Calu3 (cell line): ENCODE measurements at regions of chr5 and their contacts with region 1.

Region 1: DNA sequence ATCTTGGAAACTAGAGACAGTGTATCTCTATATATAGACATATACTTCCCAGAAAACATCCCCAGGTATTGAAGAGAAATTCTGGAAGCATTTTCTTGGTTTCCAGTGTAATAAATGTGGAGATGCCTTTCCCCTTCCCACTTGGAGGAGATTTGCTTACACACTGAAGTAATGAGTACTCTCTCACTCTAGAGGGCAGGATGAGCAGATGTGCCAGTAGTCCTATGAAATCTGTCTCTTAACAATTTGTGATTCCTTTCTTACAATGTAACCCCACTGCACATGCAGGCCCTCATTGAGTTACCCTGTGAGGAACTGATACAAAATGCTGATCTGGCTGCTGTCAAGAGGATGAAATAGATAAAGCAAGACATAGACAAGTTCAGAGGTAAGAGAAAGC is 567.2 kb downstream of the SLCO4C1 start:
- DNase-seq: no peak
- H3K4me3 Mint-ChIP-seq: no peak overlapping the region
- H3K27ac Mint-ChIP-seq: no peak overlapping the region
- H3K4me1 Mint-ChIP-seq: peaks cover 14% of the 10 kb centered on the region
- H3K27me3 Mint-ChIP-seq: no peaks in the 10 kb centered on the region
- CTCF ChIP-seq: no peak

Region 2: DNA sequence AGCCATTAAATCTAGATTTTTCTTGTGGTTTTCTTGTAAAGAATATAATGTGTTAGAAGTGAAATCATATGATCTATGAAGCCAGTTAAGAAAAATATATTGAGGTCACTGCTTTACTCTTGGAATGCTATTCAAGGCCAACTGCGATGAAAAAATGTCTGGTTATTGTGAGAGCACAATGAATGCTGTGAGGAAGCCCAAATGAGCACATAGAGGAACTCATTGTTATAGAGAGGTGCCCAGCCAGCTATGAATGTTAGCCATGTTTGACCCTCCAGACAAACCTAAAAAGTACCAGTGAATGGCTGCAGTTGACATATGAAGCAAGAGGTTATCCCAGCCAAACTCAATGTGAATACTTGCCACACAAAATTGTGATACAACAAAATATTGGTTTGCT is 1553.6 kb before region 1 on chr5:
- CTCF ChIA-PET with region 1: no interaction called
- intact Hi-C with region 1: no loop called
- DNase-seq: no peak
- H3K4me3 Mint-ChIP-seq: no peak overlapping the region
- H3K27ac Mint-ChIP-seq: no peak overlapping the region
- H3K4me1 Mint-ChIP-seq: no peaks in the 10 kb centered on the region
- H3K27me3 Mint-ChIP-seq: no peaks in the 10 kb centered on the region
- CTCF ChIP-seq: no peak

Region 3: DNA sequence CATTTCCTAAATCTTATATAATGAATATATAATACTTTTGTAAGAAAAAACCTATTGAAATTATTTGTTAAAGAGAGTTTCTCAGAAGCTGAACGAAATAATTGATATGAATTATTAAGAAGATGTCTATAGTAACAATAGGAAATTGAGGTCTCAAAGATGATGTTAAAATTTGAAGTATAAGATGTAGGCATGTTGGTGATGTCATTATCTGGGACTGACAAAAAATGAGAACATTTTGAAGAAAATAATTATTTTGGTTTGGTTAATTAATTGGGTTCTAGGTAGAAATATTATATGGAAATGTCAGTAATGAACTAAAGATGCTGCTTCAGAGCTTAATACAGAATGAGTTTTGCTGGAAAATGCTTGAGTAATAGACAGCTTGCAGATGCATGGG is 324.4 kb before region 1 on chr5:
- CTCF ChIA-PET with region 1: no interaction called
- intact Hi-C with region 1: loop called (anchors 1 kb)
- DNase-seq: no peak
- H3K4me3 Mint-ChIP-seq: no peak overlapping the region
- H3K27ac Mint-ChIP-seq: no peak overlapping the region
- H3K4me1 Mint-ChIP-seq: no peaks in the 10 kb centered on the region
- H3K27me3 Mint-ChIP-seq: no peaks in the 10 kb centered on the region
- CTCF ChIP-seq: no peak

Region 4: DNA sequence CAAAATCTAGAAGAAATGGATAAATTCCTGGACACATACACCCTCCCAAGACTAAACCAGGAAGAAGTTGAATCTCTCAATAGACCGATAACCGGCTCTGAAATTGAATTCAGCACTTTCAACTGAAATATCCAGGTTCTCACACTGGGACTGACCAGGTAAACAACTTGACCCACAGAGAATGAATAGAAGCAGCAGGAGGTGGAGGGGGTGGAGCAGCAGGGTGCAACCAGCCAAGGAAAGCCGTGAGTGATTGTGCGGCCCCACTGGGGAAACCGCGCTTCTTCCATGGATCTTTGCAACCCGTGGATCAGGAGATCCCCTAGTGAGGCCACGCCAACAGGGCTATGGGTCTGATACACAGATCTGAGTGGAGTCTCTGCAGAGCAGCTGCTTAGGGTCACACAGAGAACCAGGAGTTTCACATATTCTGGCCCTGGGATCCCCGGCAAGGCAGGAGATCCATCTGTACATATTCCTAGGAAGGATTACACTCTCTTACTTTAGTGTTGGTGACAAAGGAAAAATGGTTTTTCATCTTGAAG is 385.7 kb after region 1 on chr5:
- CTCF ChIA-PET with region 1: no interaction called
- intact Hi-C with region 1: no loop called
- DNase-seq: no peak
- H3K4me3 Mint-ChIP-seq: no peak overlapping the region
- H3K27ac Mint-ChIP-seq: no peak overlapping the region
- H3K4me1 Mint-ChIP-seq: no peaks in the 10 kb centered on the region
- H3K27me3 Mint-ChIP-seq: no peaks in the 10 kb centered on the region
- CTCF ChIP-seq: no peak